ENCODE measurements at regions of chr2 and their contacts with region 1.

Region 1: GRCh38 chr2:529425-529824 is 147.8 kb downstream of the TMEM18 start:
- DNase-seq: no peak
- H3K4me3 ChIP-seq: no peak overlapping the region
- H3K27ac ChIP-seq: no peak overlapping the region
- H3K4me1 ChIP-seq: peaks cover 0 to 8% (median 5%) of the 10 kb centered on the region in 4 experiments; a peak in 4 of 7 replicates
- H3K27me3 ChIP-seq: peaks cover 0 to 3% (median 0%) of the 10 kb centered on the region in 4 experiments; a peak in 1 of 7 replicates
- CTCF ChIP-seq: peak in 2 of 3 experiments; percentile 67 to 69; a peak in 3 of 4 replicates
- EP300 ChIP-seq: no peak
- POLR2A ChIP-seq: no peak
- RAD21 ChIP-seq: peak; percentile 76 to 79

Region 2: DNA sequence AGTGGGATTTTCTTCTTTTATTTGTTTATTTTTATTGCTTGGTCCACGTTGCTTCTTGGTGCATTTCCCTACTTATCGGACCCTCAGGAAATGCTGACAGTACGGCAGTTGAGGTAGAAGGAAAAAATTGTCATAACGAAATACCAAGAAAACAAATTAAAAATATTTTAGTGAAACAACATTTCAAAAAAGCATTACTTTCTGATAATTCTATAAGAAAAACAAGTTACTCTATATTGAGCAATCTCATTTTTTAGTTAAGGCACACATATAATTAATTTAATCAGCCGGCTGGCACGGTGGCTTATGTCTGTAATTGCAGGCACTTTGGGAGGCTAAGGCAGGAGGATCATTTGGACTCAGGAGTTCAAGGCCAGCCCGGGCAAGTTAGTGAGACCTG is 367.7 kb before region 1 on chr2:
- CTCF ChIA-PET with region 1: no interaction called
- POLR2A ChIA-PET with region 1: no interaction called
- DNase-seq: no peak
- H3K4me3 ChIP-seq: no peak overlapping the region
- H3K27ac ChIP-seq: no peak overlapping the region
- H3K4me1 ChIP-seq: no peaks in the 10 kb centered on the region
- H3K27me3 ChIP-seq: no peaks in the 10 kb centered on the region
- CTCF ChIP-seq: no peak
- EP300 ChIP-seq: no peak
- POLR2A ChIP-seq: no peak
- RAD21 ChIP-seq: no peak

Region 3: DNA sequence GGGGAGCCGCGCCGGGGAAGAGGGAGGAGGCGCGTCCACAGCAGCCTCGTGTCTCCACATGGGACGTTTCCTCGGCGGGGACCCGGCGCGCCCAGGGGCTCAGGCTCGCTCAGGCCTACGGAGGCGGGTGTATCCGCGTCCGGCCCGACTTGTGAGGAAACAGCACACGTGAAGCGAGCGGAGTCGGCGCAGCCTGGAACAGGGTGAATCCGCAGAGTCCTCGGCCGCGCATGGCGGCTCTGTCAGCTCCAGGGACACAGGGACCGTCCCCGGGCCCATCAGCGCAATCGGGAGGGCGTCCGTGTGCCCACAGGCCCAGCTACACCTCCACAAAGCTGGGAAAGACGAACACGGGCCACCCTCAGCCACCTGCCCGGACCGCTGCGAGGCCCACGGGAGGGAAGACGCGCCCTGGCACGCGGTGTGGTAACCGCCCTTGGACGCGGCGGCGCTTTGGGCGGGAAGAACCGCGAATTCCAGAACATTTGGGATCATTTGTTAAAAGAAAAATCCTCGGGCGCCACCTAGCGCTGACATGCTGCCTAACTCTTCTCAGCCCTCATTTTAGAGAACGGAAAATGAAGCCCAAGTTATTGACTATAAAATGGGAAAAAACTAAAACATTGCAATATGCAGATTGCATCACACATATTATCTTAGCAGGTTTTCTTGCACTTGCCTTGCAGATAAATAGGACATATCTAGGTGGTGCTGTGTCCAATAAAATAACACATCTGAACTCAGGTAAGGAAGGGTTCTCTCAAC is 107.4 kb after region 1 on chr2:
- CTCF ChIA-PET with region 1: interaction called, 13 read pairs
- POLR2A ChIA-PET with region 1: no interaction called
- DNase-seq: peak; percentile 31 to 90
- H3K4me3 ChIP-seq: no peak overlapping the region
- H3K27ac ChIP-seq: no peak overlapping the region
- H3K4me1 ChIP-seq: no peaks in the 10 kb centered on the region
- H3K27me3 ChIP-seq: peaks cover 8 to 13% (median 12%) of the 10 kb centered on the region in 4 experiments
- CTCF ChIP-seq: peak; percentile 30 to 82 (median 79)
- EP300 ChIP-seq: peak in 1 of 2 experiments; percentile 46; a peak in 1 of 3 replicates
- POLR2A ChIP-seq: no peak
- RAD21 ChIP-seq: peak; percentile 85 to 93

Region 4: DNA sequence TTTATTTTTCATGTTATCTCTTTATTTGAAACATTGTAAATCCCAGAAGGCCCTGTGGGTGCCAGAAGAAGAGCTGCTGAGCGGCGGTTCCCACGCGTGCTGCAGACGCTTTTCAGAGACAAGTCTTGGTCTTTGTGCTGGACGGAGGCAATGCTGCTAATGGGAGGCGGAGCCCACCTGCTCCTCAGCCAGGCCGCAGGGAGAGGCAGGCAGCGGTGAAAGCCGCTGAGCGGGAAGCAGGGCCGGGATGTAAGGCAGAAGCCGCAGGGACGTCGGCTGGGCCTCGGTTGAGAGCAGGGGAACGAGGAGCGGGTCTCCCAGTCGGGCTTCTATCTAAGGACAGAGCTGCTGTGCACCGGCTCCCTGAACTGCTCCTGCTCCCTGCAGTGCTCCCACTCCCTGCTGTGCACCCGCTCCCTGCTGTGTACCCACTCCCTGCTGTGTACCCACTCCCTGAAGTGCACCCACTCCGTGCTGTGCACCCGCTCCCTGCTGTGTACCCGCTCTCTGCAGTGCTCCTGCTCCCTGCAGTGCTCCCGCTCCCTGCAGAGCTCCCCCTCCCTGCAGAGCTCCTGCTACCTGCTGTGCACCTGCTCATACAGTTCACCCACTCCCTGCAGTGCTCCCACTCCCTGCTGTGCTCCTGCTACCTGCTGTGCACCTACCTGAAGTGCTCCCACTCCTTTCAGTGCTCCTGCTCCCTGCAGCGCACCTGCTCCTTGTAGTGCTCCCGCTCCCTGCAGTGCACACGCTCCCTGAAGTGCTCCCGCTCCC is 131.3 kb after region 1 on chr2:
- CTCF ChIA-PET with region 1: interaction called, 15 read pairs
- POLR2A ChIA-PET with region 1: no interaction called
- DNase-seq: peak; percentile 43 to 64
- H3K4me3 ChIP-seq: no peak overlapping the region
- H3K27ac ChIP-seq: no peak overlapping the region
- H3K4me1 ChIP-seq: peaks cover 0 to 6% (median 0%) of the 10 kb centered on the region in 4 experiments; a peak in 2 of 7 replicates
- H3K27me3 ChIP-seq: no peaks in the 10 kb centered on the region; a peak in 1 of 7 replicates
- CTCF ChIP-seq: no peak
- EP300 ChIP-seq: no peak
- POLR2A ChIP-seq: no peak
- RAD21 ChIP-seq: no peak

Measured in H1 (cell line).